HepG2 (cell line): ENCODE measurements at regions of chr3 and their contacts with region 1.

Region 1: DNA sequence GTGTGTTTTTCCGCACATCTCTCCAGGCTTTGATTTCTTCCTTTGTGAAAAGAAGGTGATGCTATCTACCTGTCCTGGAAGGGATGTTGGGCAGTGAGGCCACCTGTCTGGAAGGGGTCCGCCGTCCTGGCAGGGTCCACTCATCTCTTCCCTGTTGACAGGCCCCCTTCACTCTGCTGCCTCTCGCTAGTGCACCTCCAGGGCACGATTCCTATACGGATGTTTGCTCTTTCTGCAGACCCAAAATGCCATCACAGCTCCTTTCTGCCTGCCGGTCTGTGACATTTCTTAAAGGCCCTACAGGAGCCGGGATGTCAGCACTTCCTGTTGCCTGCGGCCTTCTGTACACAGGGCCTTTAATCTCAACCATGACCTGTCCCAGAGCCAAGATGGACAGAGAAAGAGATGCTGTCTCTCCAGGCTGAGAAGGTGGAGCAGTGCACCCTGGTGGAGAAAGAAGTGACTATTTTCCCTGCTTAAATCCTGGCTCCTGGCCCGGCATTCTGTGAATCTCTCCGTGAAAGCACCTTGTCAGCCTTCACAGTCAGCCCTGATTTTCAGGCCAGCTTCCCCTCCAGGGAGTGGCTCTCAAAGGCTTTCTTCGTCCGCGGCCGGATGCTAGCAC is 7.4 kb downstream of the FAM3D start:
- DNase-seq: peak; percentile 33
- ATAC-seq: peak; percentile 83
- H3K4me3 ChIP-seq: no peak overlapping the region
- H3K27ac ChIP-seq: no peak overlapping the region
- H3K4me1 ChIP-seq: no peaks in the 10 kb centered on the region
- H3K27me3 ChIP-seq: peaks cover 0 to 33% of the 10 kb centered on the region in 2 experiments; a peak in 3 of 5 replicates
- CTCF ChIP-seq: peak; percentile 58
- EP300 ChIP-seq: no peak
- POLR2A ChIP-seq: no peak
- RAD21 ChIP-seq: no peak

Region 2: GRCh38 chr3:58588030-58588614 is 71.0 kb before region 1 on chr3:
- CTCF ChIA-PET with region 1: no interaction called
- POLR2A ChIA-PET with region 1: no interaction called
- in situ Hi-C with region 1: no loop called
- intact Hi-C with region 1: loop called (anchors 2 kb)
- DNase-seq: no peak
- ATAC-seq: no peak
- H3K4me3 ChIP-seq: no peak overlapping the region
- H3K27ac ChIP-seq: no peak overlapping the region
- H3K4me1 ChIP-seq: peaks cover 14% of the 10 kb centered on the region
- H3K27me3 ChIP-seq: peaks cover 0 to 9% of the 10 kb centered on the region in 2 experiments; a peak in 3 of 5 replicates
- CTCF ChIP-seq: no peak
- EP300 ChIP-seq: no peak
- POLR2A ChIP-seq: no peak
- RAD21 ChIP-seq: no peak

Region 3: DNA sequence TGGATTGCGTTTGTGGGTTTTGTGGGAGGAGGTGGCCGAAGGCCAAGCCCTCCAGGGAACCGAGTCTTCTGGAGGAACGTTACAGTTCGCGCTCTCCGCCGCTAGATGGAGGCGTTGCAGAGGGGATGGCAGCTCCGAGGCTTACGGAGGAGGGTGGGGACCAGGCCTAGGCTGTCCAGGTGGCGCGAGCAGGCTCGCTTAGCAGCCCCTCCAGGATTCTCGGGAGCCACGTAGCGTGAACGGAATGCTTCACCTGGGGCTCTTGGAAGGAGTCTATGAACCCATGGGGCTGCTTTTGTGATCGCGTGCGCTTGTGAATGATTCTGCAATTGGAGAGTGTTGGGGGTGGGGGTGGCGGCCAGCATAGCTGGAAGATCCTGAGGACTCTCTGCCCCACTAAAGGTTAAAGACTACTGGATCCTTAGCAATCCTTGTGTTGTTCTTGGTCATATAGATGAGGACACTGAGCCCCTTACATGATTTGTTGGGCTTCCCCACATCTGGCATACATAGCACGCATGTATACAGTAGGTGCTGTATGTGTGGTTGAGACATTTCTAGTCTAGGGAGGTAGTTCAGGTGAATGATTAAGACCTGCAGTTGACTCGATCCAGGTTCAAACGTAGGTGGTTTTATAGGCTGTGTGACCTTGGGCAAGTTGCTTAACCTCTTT is 18.3 kb before region 1 on chr3:
- CTCF ChIA-PET with region 1: interaction called, 3 read pairs
- POLR2A ChIA-PET with region 1: no interaction called
- in situ Hi-C with region 1: no loop called
- intact Hi-C with region 1: loop called (anchors 1 kb)
- DNase-seq: peak; percentile 56
- ATAC-seq: peak; percentile 95
- H3K4me3 ChIP-seq: no peak overlapping the region
- H3K27ac ChIP-seq: no peak overlapping the region
- H3K4me1 ChIP-seq: no peaks in the 10 kb centered on the region
- H3K27me3 ChIP-seq: peaks cover 4 to 27% of the 10 kb centered on the region in 2 experiments; a peak in 3 of 5 replicates
- CTCF ChIP-seq: peak; percentile 97
- EP300 ChIP-seq: no peak
- POLR2A ChIP-seq: no peak
- RAD21 ChIP-seq: peak; percentile 91

Region 4: GRCh38 chr3:58776231-58776630 is 117.1 kb after region 1 on chr3:
- CTCF ChIA-PET with region 1: no interaction called
- POLR2A ChIA-PET with region 1: no interaction called
- in situ Hi-C with region 1: no loop called
- intact Hi-C with region 1: no loop called
- DNase-seq: no peak
- ATAC-seq: no peak
- H3K4me3 ChIP-seq: no peak overlapping the region
- H3K27ac ChIP-seq: no peak overlapping the region
- H3K4me1 ChIP-seq: no peaks in the 10 kb centered on the region
- H3K27me3 ChIP-seq: no peaks in the 10 kb centered on the region; a peak in 1 of 5 replicates
- CTCF ChIP-seq: peak; percentile 24; the same call in 1 of the 2 replicates
- EP300 ChIP-seq: no peak
- POLR2A ChIP-seq: no peak
- RAD21 ChIP-seq: no peak